Caco-2 (cell line): ENCODE measurements at regions of chr17 and their contacts with region 1.

Region 1: GRCh38 chr17:29042679-29043538 is at the start of gene PIPOX:
- DNase-seq: no peak
- H3K4me3 ChIP-seq: no peak within 1 kb of the TSS
- H3K4me3 Mint-ChIP-seq: no peak within 1 kb of the TSS
- H3K27ac Mint-ChIP-seq: no peak within 1 kb of the TSS
- H3K4me1 ChIP-seq: no peaks in the 10 kb centered on the region
- H3K4me1 Mint-ChIP-seq: peaks cover 17% of the 10 kb centered on the region
- H3K27me3 ChIP-seq: no peaks in the 10 kb centered on the region
- H3K27me3 Mint-ChIP-seq: peaks cover 3% of the 10 kb centered on the region
- CTCF ChIP-seq: no peak
- total RNA-seq, gene PIPOX: 2.1 and 2.2 TPM in 2 replicates

Region 2: GRCh38 chr17:28777178-28777577 is 265.7 kb before region 1 on chr17:
- CTCF ChIA-PET with region 1: no interaction called
- POLR2A ChIA-PET with region 1: no interaction called
- intact Hi-C with region 1: no loop called
- DNase-seq: no peak
- H3K4me3 ChIP-seq: no peak overlapping the region
- H3K4me3 Mint-ChIP-seq: no peak overlapping the region
- H3K27ac Mint-ChIP-seq: no peak overlapping the region
- H3K4me1 ChIP-seq: no peaks in the 10 kb centered on the region
- H3K4me1 Mint-ChIP-seq: no peaks in the 10 kb centered on the region
- H3K27me3 ChIP-seq: no peaks in the 10 kb centered on the region
- H3K27me3 Mint-ChIP-seq: no peaks in the 10 kb centered on the region
- CTCF ChIP-seq: no peak

Region 3: GRCh38 chr17:29005936-29006511 is 36.9 kb before region 1 on chr17 and contains the start of gene SEZ6:
- CTCF ChIA-PET with region 1: no interaction called
- POLR2A ChIA-PET with region 1: no interaction called
- intact Hi-C with region 1: loop called (anchors 5 kb)
- DNase-seq: peak; percentile 82 to 92
- H3K4me3 ChIP-seq: no peak within 1 kb of the TSS
- H3K4me3 Mint-ChIP-seq: no peak within 1 kb of the TSS
- H3K27ac Mint-ChIP-seq: no peak within 1 kb of the TSS
- H3K4me1 ChIP-seq: peaks cover 5% of the 10 kb centered on the region; the same call in 1 of the 2 replicates
- H3K4me1 Mint-ChIP-seq: no peaks in the 10 kb centered on the region
- H3K27me3 ChIP-seq: no peaks in the 10 kb centered on the region; the same call in 1 of the 2 replicates
- H3K27me3 Mint-ChIP-seq: peaks cover 26% of the 10 kb centered on the region
- CTCF ChIP-seq: no peak
- total RNA-seq, gene SEZ6: not detected in 2 replicates

Region 4: GRCh38 chr17:29111816-29112499 is 69.0 kb after region 1 on chr17:
- CTCF ChIA-PET with region 1: no interaction called
- POLR2A ChIA-PET with region 1: no interaction called
- intact Hi-C with region 1: loop called (anchors 5 kb)
- DNase-seq: peak; percentile 65 to 84
- H3K4me3 ChIP-seq: no peak overlapping the region
- H3K4me3 Mint-ChIP-seq: no peak overlapping the region
- H3K27ac Mint-ChIP-seq: no peak overlapping the region
- H3K4me1 ChIP-seq: peaks cover 9% of the 10 kb centered on the region
- H3K4me1 Mint-ChIP-seq: no peaks in the 10 kb centered on the region
- H3K27me3 ChIP-seq: no peaks in the 10 kb centered on the region
- H3K27me3 Mint-ChIP-seq: no peaks in the 10 kb centered on the region
- CTCF ChIP-seq: peak; percentile 86 to 98